H1 (cell line): ENCODE measurements at regions of chr2 and their contacts with region 1.

Region 1: DNA sequence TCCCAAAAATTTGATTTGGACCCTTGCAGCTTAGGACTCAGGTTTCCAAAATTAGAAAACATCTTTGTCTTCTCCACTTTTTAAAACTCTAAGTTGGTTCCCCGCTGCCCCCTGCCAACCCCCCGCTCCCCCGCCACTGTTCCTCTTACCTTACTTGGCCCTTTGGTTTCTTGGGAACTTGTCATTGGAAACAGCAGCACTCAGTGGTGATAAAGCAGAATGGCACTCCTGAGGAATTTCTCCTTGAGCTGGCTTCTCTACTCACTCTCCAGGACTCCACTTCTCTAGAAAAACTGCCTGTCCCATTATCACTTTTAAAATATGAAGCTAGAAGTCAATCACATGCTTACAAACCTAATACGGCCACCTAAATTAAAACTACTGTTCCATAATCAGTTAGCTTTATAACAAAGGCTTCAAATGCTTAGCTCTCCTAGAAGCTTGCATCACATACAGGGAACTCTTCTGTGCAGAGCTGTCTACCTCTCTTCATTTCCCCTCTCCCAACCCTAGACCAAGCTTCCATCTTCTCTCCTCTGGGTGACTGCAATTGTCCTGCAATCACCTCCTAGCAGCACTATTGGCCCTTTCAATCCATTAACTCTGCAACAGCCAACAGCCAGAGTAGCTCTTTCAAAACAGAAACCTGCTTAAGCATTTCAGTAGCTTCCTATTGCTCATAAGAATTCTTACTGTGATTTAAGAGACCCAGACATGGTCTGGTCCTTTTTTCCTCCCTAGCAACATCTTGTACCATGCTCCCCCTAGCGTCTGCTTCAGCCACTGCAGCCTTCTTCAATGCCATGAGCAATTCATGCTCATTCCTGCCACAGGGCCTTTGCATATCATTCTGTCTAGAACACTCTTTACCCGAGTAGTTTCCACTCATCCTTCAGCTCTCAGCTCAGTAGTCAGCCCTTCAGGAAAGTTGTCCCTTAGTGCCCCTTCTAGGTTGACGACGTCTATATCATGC is 15.2 kb upstream of the PLEKHM3 start:
- DNase-seq: peak in 1 of 2 experiments; percentile 84
- H3K4me3 ChIP-seq: no peak overlapping the region
- H3K27ac ChIP-seq: no peak overlapping the region
- H3K4me1 ChIP-seq: peaks cover 0 to 13% (median 7%) of the 10 kb centered on the region in 4 experiments; a peak in 2 of 7 replicates
- H3K27me3 ChIP-seq: no peaks in the 10 kb centered on the region
- CTCF ChIP-seq: peak; percentile 62 to 94 (median 69)
- EP300 ChIP-seq: no peak
- POLR2A ChIP-seq: no peak
- RAD21 ChIP-seq: peak; percentile 77 to 79

Region 2: DNA sequence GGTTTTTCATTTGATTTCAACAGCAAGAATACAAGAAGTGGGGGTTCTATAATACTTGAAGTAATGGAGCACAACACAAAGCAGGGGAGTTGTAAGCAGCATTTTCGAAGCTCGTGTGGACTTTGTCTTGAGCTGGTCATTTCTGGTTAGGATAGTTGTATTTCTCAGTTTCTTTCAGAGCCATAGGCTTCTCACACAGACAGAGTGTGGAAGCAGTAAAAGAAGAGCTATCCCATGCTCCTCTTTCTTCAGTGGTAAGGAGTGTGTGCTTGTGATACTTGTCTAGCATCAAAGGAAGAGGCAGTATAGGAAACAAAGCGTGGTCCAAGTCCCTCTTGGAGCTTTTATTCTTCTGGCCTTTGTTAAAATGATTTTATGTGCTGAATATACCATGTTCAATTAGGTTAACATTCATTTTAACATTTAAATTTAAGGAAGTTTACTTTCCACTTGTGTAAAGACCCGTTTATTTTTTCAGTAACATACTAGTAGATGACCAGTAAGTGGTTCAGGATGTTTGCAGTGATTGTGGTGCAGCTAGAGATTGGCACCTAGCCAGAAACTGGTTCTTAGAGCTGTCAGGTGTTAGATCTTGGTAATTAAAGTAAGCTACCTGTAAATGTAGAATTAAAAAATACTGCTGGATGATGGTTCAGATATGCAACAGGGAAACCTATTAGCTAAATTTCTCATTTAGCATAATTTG is 314.5 kb before region 1 on chr2:
- CTCF ChIA-PET with region 1: interaction called, 10 read pairs
- POLR2A ChIA-PET with region 1: no interaction called
- DNase-seq: no peak
- H3K4me3 ChIP-seq: no peak overlapping the region
- H3K27ac ChIP-seq: no peak overlapping the region
- H3K4me1 ChIP-seq: 0 out of 7 replicates have a peak, but pooled peaks cover 0 to 5% (median 0%) of the 10 kb centered on the region in 4 experiments
- H3K27me3 ChIP-seq: no peaks in the 10 kb centered on the region
- CTCF ChIP-seq: no peak
- EP300 ChIP-seq: no peak
- POLR2A ChIP-seq: no peak
- RAD21 ChIP-seq: no peak

Region 3: GRCh38 chr2:207782238-207783030 is 258.1 kb before region 1 on chr2:
- CTCF ChIA-PET with region 1: interaction called, 20 read pairs
- POLR2A ChIA-PET with region 1: no interaction called
- DNase-seq: no peak
- H3K4me3 ChIP-seq: no peak overlapping the region
- H3K27ac ChIP-seq: no peak overlapping the region
- H3K4me1 ChIP-seq: peaks cover 0 to 2% (median 0%) of the 10 kb centered on the region in 4 experiments; a peak in 3 of 7 replicates
- H3K27me3 ChIP-seq: no peaks in the 10 kb centered on the region
- CTCF ChIP-seq: no peak
- EP300 ChIP-seq: no peak
- POLR2A ChIP-seq: no peak
- RAD21 ChIP-seq: no peak

Region 4: GRCh38 chr2:207896525-207897295 is 143.8 kb before region 1 on chr2:
- CTCF ChIA-PET with region 1: interaction called, 43 read pairs
- POLR2A ChIA-PET with region 1: no interaction called
- DNase-seq: peak in 1 of 2 experiments; percentile 36
- H3K4me3 ChIP-seq: peak overlapping the region in 1 of 4 experiments; percentile 24; a peak in 1 of 8 replicates
- H3K27ac ChIP-seq: 0 out of 2 replicates have a peak overlapping the region, but pooled peaks have one; percentile 57
- H3K4me1 ChIP-seq: peaks cover 12 to 37% (median 30%) of the 10 kb centered on the region in 4 experiments
- H3K27me3 ChIP-seq: no peaks in the 10 kb centered on the region
- CTCF ChIP-seq: peak; percentile 46 to 61 (median 49)
- EP300 ChIP-seq: no peak
- POLR2A ChIP-seq: no peak
- RAD21 ChIP-seq: peak; percentile 31 to 50; a peak in 3 of 4 replicates

Region 5: DNA sequence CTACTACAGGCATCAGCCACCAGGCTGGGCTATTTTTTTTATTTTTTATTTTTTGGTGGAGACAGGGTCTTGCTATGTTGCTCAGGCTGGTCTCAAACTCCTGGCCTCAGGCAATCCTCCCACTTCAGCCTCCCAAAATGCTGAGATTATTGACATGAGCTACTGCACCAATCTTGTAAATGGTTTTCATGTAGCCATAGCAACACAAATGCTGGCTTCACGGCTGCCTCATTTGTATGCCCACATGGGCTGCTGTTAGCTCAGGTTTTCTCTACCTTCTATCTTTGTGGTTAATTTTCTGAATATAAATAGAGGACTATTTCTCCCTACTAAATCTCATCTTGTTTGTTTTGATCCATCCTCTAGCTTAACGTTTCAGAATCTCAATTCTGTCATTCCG is 73.4 kb before region 1 on chr2:
- CTCF ChIA-PET with region 1: interaction called, 22 read pairs
- POLR2A ChIA-PET with region 1: no interaction called
- DNase-seq: no peak
- H3K4me3 ChIP-seq: no peak overlapping the region
- H3K27ac ChIP-seq: no peak overlapping the region
- H3K4me1 ChIP-seq: peaks cover 8 to 40% (median 16%) of the 10 kb centered on the region in 4 experiments; a peak in 6 of 7 replicates
- H3K27me3 ChIP-seq: no peaks in the 10 kb centered on the region
- CTCF ChIP-seq: no peak
- EP300 ChIP-seq: no peak
- POLR2A ChIP-seq: no peak
- RAD21 ChIP-seq: no peak

Region 6: DNA sequence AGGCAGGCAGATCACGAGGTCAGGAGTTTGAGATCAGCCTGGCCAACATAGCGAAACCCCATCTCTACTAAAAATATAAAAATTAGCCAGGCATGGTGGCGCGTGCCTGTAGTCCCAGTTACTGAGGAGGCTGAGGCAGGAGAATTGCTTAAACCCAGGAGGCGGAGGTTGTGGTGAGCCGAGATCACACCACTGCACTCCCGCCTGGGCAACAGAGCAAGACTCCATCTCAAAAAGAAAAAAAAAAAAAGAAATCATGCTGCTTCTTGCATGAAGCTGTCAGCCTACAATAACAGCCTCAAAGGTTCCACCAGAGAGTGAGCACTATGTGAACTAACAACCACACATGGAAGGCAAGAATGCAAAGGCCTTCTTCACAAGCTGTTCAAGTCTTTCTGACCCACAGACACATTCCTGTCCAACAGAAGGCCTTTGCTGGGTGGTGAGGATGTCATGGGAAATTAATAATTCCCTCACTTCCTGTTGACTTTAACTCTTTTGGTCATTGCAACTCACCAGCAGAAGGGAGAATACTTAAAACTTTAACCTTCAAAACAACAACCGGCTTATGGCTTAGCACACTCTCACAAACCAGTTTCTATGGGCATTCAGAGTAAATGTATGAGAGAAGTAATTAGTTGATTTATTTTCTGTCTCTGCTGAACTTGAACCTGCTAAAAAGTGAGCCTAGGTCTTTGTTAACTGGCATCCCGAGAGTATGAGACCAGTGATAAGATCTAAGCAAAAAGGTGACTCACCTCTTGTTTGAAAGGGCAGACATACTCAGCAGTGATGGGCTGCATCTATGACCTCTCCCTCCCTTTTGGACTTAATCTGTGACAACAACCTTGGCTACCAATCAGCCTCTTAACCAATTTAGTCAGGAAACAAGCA is 27.0 kb before region 1 on chr2:
- CTCF ChIA-PET with region 1: interaction called, 73 read pairs
- POLR2A ChIA-PET with region 1: no interaction called
- DNase-seq: no peak
- H3K4me3 ChIP-seq: no peak overlapping the region
- H3K27ac ChIP-seq: no peak overlapping the region
- H3K4me1 ChIP-seq: no peaks in the 10 kb centered on the region
- H3K27me3 ChIP-seq: no peaks in the 10 kb centered on the region
- CTCF ChIP-seq: no peak
- EP300 ChIP-seq: no peak
- POLR2A ChIP-seq: no peak
- RAD21 ChIP-seq: no peak

Region 7: GRCh38 chr2:208072250-208072892 is 31.9 kb after region 1 on chr2:
- CTCF ChIA-PET with region 1: interaction called, 29 read pairs
- POLR2A ChIA-PET with region 1: no interaction called
- DNase-seq: peak; percentile 33 to 86
- H3K4me3 ChIP-seq: no peak overlapping the region
- H3K27ac ChIP-seq: no peak overlapping the region
- H3K4me1 ChIP-seq: peaks cover 0 to 2% (median 0%) of the 10 kb centered on the region in 4 experiments; a peak in 3 of 7 replicates
- H3K27me3 ChIP-seq: no peaks in the 10 kb centered on the region
- CTCF ChIP-seq: peak; percentile 36 to 88 (median 83)
- EP300 ChIP-seq: no peak
- POLR2A ChIP-seq: no peak
- RAD21 ChIP-seq: peak; percentile 93 to 94